Panc1 (cell line): ENCODE measurements at regions of chr11 and their contacts with region 1.

Region 1: DNA sequence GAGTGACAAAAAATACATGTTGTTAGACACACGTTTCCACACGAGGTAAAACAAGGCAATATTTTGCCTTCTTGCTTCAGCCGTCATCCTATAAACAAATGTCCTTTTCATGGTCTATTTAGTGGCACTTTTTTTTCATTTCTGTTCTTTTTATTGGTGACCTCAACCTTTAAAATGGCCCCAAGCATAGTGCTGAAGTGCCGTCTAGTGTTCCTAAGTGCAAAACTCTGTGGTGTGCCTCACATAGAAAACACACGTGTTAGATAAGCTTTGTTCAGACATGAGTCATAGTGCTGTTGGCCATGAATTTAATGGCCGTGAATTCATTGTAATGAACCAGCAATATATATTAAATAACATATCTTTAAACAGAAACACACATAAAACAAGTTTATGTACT is 15.6 kb downstream of the OVCH2 start:
- DNase-seq: no peak
- ATAC-seq: no peak
- H3K4me3 ChIP-seq: no peak overlapping the region
- H3K27ac ChIP-seq: no peak overlapping the region
- H3K4me1 ChIP-seq: no peaks in the 10 kb centered on the region
- H3K27me3 ChIP-seq: peaks cover 49% of the 10 kb centered on the region
- CTCF ChIP-seq: no peak

Region 2: DNA sequence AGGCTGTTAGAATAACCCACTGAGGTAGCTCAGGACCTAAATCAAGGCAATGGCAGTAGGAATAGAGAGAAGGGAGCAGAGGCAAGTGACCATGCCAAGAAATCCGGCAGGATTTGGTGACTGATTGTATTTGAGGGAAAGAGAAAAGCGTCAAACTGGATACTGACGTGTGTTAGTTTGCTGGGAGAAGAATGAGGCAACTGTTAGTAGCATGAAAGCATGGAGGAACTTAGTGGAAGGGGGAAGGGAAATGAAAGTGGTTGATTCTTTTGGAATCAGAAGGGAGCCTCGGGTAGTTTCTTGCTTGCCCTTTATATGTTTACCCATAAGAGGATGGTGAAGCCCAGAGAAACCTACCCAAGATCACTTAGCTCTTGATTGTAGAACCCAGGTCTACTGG is 168.5 kb before region 1 on chr11:
- CTCF ChIA-PET with region 1: interaction called, 11 read pairs
- POLR2A ChIA-PET with region 1: no interaction called
- in situ Hi-C with region 1: no loop called
- intact Hi-C with region 1: no loop called
- DNase-seq: no peak
- ATAC-seq: no peak
- H3K4me3 ChIP-seq: no peak overlapping the region
- H3K27ac ChIP-seq: no peak overlapping the region
- H3K4me1 ChIP-seq: no peaks in the 10 kb centered on the region
- H3K27me3 ChIP-seq: no peaks in the 10 kb centered on the region
- CTCF ChIP-seq: no peak

Region 3: GRCh38 chr11:7677071-7677470 is 13.6 kb before region 1 on chr11:
- CTCF ChIA-PET with region 1: no interaction called
- POLR2A ChIA-PET with region 1: no interaction called
- in situ Hi-C with region 1: no loop called
- intact Hi-C with region 1: no loop called
- DNase-seq: no peak
- ATAC-seq: peak; percentile 5; the same call in 1 of the 2 replicates
- H3K4me3 ChIP-seq: no peak overlapping the region
- H3K27ac ChIP-seq: no peak overlapping the region
- H3K4me1 ChIP-seq: peaks cover 14% of the 10 kb centered on the region; the same call in 1 of the 2 replicates
- H3K27me3 ChIP-seq: peaks cover 4% of the 10 kb centered on the region; the same call in 1 of the 2 replicates
- CTCF ChIP-seq: no peak

Region 4: DNA sequence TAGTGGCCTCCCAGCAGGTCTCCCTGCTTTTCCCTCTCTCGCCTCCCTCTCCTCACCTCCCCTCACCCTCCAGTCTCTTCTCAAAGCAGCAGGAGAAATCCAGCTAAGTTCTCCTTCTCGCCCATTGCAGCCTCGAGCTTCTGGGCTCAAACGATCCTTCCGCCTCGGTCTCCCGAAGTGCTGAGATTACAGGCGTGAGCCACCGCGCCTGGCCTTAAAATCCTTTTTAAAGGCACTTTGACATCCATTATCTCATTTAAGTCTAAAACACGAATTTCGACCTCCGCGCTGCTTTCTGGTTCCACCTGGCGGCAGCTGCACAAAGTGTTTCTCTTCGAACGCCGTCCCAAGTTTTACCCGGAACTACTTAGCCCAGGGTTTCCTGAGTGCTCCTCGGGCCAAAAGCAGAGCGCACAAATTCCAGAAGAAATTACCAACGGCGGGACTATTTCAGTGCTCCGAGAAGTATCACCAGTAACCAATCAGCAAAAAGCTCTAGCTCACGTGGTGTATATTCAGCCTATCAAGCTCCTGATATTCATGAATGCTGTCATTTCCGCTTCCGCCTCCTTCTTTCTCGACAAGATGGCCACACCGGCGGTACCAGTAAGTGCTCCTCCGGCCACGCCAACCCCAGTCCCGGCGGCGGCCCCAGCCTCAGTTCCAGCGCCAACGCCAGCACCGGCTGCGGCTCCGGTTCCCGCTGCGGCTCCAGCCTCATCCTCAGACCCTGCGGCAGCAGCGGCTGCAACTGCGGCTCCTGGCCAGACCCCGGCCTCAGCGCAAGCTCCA is 296.3 kb after region 1 on chr11 and contains the start of gene EIF3F:
- CTCF ChIA-PET with region 1: interaction called, 3 read pairs
- POLR2A ChIA-PET with region 1: no interaction called
- in situ Hi-C with region 1: no loop called
- intact Hi-C with region 1: loop called (anchors 10 kb)
- DNase-seq: peak; percentile 100
- ATAC-seq: peak; percentile 100
- H3K4me3 ChIP-seq: peak within 1 kb of the TSS; percentile 85
- H3K27ac ChIP-seq: peak within 1 kb of the TSS; percentile 95
- H3K4me1 ChIP-seq: peaks cover 21% of the 10 kb centered on the region
- H3K27me3 ChIP-seq: no peaks in the 10 kb centered on the region
- CTCF ChIP-seq: peak; percentile 98
- total RNA-seq, gene EIF3F: 387 TPM